ENCODE measurements at regions of chr7 and their contacts with region 1.

Region 1: DNA sequence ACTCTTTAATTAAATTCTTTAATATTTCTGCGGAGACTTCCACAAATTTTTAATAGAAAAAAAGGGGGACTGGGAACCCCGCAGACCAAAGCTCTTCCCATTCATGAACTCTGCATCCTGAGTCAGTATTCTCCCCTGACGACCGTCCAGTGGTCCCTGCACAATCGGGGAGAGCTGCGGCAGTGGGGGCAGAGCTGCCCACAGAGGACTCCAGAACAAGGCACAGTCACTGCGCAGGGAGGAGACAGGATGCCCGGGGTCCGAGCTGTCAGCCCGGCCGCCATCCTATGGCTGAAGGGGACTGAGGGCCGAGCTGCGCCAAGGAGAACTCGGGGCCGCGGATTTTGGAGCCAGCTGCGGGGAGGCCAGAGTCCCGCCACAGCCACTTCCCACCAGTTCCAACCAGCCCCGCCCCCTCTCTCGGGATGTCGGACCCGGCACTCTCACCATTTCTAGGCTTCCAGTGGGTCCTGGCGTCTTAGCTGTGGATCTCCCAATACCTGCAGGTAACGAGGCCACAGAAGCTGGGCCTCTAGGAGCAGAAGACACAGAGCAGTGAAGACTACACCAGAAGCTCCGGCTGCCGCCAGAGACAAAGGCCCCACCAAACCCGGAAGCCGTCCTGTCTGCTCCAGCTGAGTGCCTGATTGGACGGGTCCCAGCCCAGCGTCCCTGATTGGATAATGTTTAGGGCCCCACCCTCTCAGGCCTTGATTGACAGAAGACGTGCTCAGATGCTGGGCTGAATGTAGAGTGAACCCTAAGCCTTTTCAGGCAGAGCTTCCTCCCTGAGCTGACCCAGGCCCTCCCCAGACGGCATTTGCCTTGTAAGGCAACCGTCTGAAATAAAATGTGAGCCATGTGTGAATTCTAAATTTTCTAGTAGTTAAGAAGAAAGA is at the start of gene ERV3-1:
- DNase-seq: peak; percentile 91
- H3K4me3 Mint-ChIP-seq: peak within 1 kb of the TSS; percentile 94
- H3K27ac Mint-ChIP-seq: peak within 1 kb of the TSS; percentile 95
- H3K4me1 Mint-ChIP-seq: peaks cover 22% of the 10 kb centered on the region
- H3K27me3 Mint-ChIP-seq: no peaks in the 10 kb centered on the region
- total RNA-seq, gene ERV3-1: 9.7 and 9.8 TPM in 2 replicates

Region 2: DNA sequence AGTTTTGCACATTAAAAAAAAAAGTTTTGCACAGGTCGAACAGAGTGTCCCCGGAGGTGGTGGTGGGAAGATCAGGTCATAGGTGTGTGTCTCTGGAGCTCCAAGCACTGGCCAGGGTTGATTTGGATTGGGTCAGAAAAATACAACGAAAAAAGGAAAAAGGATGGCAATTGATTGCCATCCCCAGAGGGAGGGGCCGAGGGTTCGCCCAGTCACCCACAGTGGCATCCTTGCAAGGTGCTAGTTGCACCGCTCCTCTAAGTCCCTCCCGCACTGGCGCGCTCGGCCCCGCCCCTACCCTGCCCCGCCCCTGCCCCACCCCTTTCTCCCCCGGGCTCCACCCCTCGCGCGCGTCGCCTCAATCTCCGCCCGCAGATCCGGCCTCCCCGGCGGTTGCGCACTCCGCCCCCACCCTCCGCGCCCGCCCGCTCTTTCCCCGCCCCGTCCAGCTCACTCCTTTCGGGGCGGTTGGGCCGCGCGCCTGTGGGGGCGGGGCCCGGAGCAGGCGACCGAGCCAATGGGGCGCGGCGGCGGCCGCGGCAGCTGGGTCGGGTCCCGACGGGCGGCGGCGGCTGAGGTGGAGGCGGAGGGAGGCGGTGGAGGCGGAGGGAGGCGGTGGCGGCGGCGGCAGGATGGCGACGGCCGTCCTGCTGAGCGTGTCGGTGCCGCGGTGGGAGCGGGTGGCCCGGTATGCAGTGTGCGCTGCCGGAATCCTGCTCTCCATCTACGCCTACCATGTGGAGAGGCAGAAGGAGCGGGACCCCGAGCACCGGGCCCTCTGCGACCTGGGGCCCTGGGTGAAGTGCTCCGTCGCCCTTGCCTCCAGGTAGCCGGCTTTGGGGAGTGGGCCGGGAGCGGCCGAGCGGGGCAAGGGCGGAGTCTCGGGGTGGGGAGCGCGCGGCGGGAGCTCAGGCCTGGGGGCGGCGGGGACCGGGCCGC is 31.7 kb after region 1 on chr7:
- intact Hi-C with region 1: loop called (anchors 1 kb)
- DNase-seq: peak; percentile 85
- H3K4me3 Mint-ChIP-seq: peak overlapping the region; percentile 74
- H3K27ac Mint-ChIP-seq: peak overlapping the region; percentile 70
- H3K4me1 Mint-ChIP-seq: peaks cover 16% of the 10 kb centered on the region
- H3K27me3 Mint-ChIP-seq: no peaks in the 10 kb centered on the region

Measured in activated T-helper 2 cell treated with anti-CD3 and anti-CD28 coated beads, Interferon-gamma antibody, Interleukin-2, Interleukin-4, amounts not matched to agents 10 μg/mL and 5 μg/mL and 100 μg/mL, durations not matched to agents 14 hours and 24 hours and 36 hours (primary cell).